Activated CD4-positive, alpha-beta T cell treated with anti-CD3 and anti-CD28 coated beads for 36 hours (primary cell): ENCODE measurements at regions of chr1 and their contacts with region 1.

Region 1: DNA sequence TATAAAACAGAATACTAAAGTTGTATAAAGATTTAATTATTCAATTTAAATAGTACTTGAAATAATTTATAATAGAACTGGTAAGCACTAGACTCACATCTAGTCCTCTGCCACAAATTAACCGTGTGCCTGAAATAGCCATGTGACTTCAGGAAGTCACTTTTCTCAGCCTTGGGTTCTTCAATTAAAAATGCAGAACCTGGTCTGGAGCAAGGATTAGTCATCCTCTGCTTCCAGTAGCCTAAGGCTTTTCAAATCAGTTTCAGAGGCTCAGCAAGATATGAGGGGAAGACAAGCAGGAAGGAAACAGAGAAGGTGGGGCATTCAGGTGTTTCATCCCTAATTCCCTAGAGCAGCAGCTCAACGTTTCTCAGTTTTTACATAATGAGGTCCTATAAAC is 23.0 kb downstream of the DPH5 start:
- DNase-seq: no peak
- ATAC-seq: no peak
- H3K4me3 Mint-ChIP-seq: no peak overlapping the region
- H3K27ac Mint-ChIP-seq: no peak overlapping the region
- H3K4me1 Mint-ChIP-seq: peaks cover 50% of the 10 kb centered on the region
- H3K27me3 Mint-ChIP-seq: no peaks in the 10 kb centered on the region

Region 2: GRCh38 chr1:100883963-100884362 is 118.6 kb before region 1 on chr1:
- CTCF ChIA-PET with region 1: no interaction called
- POLR2A ChIA-PET with region 1: no interaction called
- intact Hi-C with region 1: no loop called
- DNase-seq: no peak
- ATAC-seq: peak; percentile 60
- H3K4me3 Mint-ChIP-seq: no peak overlapping the region
- H3K27ac Mint-ChIP-seq: no peak overlapping the region
- H3K4me1 Mint-ChIP-seq: no peaks in the 10 kb centered on the region
- H3K27me3 Mint-ChIP-seq: no peaks in the 10 kb centered on the region

Region 3: DNA sequence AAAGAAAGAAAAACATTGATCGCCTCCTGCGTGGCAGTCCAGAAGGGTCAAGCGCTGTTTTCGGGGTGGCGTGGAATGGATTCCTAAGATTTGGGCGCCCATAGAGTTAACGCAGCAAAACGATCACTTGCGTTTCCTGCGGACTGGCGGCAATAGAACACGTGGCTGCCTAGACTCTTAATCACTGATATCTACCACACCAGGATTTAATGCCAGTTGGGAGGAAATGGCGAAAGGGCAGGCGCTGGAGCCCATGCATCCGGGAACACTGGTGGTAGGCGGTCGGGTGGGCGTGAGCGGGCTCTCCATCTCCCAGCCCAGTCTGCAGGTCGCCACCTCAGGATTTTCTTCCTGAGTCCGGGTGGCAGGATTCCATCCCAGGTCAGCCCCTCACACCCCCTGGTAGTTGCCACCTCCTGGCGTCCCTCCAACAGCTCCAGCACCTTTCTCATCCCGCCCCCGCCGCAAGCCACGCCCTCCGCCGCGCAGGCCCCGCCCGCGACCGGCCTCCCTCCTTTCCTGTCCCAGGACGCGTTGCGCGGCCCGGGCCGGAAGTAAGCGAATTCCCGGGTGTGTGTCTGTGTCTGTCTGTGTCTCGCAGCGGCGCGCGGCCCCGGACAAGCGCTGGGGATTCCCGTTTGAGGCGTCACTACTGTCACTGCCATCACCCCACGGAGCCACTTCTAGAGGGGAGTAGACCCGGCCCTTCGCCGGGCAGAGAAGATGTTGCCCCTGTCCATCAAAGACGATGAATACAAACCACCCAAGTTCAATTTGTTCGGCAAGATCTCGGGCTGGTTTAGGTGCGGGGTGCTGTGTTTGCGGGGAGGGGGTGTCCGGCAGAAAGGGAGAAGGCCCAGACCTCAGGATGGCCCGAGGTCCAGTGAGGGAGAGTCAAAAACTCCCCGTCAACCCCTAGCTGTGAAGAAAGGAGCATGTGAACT is 106.7 kb before region 1 on chr1 and contains the start of gene SLC30A7:
- CTCF ChIA-PET with region 1: no interaction called
- POLR2A ChIA-PET with region 1: no interaction called
- intact Hi-C with region 1: no loop called
- DNase-seq: peak; percentile 98
- ATAC-seq: peak; percentile 81
- H3K4me3 Mint-ChIP-seq: peak within 1 kb of the TSS; percentile 100
- H3K27ac Mint-ChIP-seq: peak within 1 kb of the TSS; percentile 100
- H3K4me1 Mint-ChIP-seq: peaks cover 44% of the 10 kb centered on the region
- H3K27me3 Mint-ChIP-seq: no peaks in the 10 kb centered on the region
- total RNA-seq, gene SLC30A7: 33.2 to 34.6 TPM

Region 4: DNA sequence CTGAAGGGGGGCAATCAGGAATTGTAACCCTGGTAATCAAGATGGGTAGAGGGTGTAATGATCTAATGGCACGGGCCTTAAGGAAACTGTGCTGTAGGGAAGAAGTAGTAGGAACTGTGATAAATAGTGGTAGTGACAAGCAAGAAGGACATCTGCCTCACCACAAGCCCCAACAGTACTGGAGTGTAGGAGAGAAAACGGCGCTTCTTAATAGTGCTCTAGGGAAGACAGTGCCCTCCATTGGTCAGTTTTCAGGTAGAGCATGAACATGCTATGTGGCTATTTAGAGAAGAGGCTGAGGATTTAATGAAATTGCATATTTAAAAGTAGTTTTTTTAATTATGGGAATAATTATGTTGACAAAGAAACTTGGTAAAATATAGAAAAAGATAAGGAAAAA is 74.4 kb before region 1 on chr1:
- CTCF ChIA-PET with region 1: no interaction called
- POLR2A ChIA-PET with region 1: interaction called, 3 read pairs
- intact Hi-C with region 1: loop called in 1 of 2 experiments (anchors 5 kb)
- DNase-seq: no peak
- ATAC-seq: no peak
- H3K4me3 Mint-ChIP-seq: no peak overlapping the region
- H3K27ac Mint-ChIP-seq: no peak overlapping the region
- H3K4me1 Mint-ChIP-seq: peaks cover 62% of the 10 kb centered on the region
- H3K27me3 Mint-ChIP-seq: no peaks in the 10 kb centered on the region

Region 5: GRCh38 chr1:100941098-100941527 is 61.4 kb before region 1 on chr1:
- CTCF ChIA-PET with region 1: no interaction called
- POLR2A ChIA-PET with region 1: no interaction called
- intact Hi-C with region 1: loop called in 1 of 2 experiments (anchors 5 kb)
- DNase-seq: peak; percentile 45
- ATAC-seq: peak; percentile 82
- H3K4me3 Mint-ChIP-seq: peak overlapping the region; percentile 67
- H3K27ac Mint-ChIP-seq: peak overlapping the region; percentile 94
- H3K4me1 Mint-ChIP-seq: peaks cover 45% of the 10 kb centered on the region
- H3K27me3 Mint-ChIP-seq: peaks cover 2% of the 10 kb centered on the region

Region 6: GRCh38 chr1:100955322-100955721 is 47.2 kb before region 1 on chr1:
- CTCF ChIA-PET with region 1: no interaction called
- POLR2A ChIA-PET with region 1: no interaction called
- intact Hi-C with region 1: loop called in 1 of 2 experiments (anchors 5 kb)
- DNase-seq: no peak
- ATAC-seq: peak; percentile 57
- H3K4me3 Mint-ChIP-seq: no peak overlapping the region
- H3K27ac Mint-ChIP-seq: peak overlapping the region; percentile 69
- H3K4me1 Mint-ChIP-seq: peaks cover 59% of the 10 kb centered on the region
- H3K27me3 Mint-ChIP-seq: no peaks in the 10 kb centered on the region

Region 7: GRCh38 chr1:101025657-101026504 is 23.3 kb after region 1 on chr1 and contains the start of gene DPH5:
- CTCF ChIA-PET with region 1: interaction called, 3 read pairs
- POLR2A ChIA-PET with region 1: no interaction called
- intact Hi-C with region 1: loop called in 1 of 2 experiments (anchors 2 kb)
- DNase-seq: peak; percentile 95
- ATAC-seq: peak; percentile 96
- H3K4me3 Mint-ChIP-seq: peak within 1 kb of the TSS; percentile 93
- H3K27ac Mint-ChIP-seq: peak within 1 kb of the TSS; percentile 98
- H3K4me1 Mint-ChIP-seq: peaks cover 55% of the 10 kb centered on the region
- H3K27me3 Mint-ChIP-seq: no peaks in the 10 kb centered on the region
- total RNA-seq, gene DPH5: 48.4 to 59.6 TPM

Region 8: DNA sequence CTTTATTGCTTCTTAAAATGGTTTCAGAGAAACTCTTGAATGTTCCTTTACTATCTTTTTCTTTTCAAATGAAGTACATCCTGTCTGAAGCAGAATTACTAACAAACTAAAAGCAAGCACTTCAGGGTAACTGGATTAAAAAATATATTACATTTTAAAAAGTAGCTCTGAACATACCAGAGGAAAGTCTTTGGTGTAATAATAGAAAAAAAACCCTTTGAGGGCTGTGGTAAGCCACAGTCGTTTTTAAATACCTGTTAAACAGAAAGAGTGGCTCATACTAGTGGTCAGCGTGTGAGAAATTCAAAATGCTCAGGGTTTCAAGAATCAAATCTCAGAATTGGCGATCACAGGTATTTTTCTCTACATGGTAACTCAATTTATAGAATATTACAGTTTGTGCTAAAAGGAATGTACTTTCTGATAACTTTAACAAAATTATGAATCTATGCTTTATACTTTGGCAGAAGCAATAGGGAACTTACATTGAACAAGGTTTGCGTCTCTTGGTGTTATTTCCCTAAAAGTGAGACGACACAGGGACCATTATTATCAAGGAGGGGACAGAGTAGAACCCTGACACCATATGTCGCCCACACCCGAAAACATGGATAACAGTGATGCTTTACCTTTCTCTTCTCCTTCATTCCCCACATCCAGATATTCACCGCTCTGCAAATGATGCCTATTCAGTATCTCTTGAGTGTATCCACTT is 120.1 kb after region 1 on chr1:
- CTCF ChIA-PET with region 1: no interaction called
- POLR2A ChIA-PET with region 1: no interaction called
- intact Hi-C with region 1: loop called in 1 of 2 experiments (anchors 5 kb)
- DNase-seq: peak; percentile 29
- ATAC-seq: peak; percentile 72
- H3K4me3 Mint-ChIP-seq: peak overlapping the region; percentile 19
- H3K27ac Mint-ChIP-seq: peak overlapping the region; percentile 30
- H3K4me1 Mint-ChIP-seq: peaks cover 49% of the 10 kb centered on the region
- H3K27me3 Mint-ChIP-seq: no peaks in the 10 kb centered on the region